ENCODE measurements at regions of chr15 and their contacts with region 1.

Region 1: DNA sequence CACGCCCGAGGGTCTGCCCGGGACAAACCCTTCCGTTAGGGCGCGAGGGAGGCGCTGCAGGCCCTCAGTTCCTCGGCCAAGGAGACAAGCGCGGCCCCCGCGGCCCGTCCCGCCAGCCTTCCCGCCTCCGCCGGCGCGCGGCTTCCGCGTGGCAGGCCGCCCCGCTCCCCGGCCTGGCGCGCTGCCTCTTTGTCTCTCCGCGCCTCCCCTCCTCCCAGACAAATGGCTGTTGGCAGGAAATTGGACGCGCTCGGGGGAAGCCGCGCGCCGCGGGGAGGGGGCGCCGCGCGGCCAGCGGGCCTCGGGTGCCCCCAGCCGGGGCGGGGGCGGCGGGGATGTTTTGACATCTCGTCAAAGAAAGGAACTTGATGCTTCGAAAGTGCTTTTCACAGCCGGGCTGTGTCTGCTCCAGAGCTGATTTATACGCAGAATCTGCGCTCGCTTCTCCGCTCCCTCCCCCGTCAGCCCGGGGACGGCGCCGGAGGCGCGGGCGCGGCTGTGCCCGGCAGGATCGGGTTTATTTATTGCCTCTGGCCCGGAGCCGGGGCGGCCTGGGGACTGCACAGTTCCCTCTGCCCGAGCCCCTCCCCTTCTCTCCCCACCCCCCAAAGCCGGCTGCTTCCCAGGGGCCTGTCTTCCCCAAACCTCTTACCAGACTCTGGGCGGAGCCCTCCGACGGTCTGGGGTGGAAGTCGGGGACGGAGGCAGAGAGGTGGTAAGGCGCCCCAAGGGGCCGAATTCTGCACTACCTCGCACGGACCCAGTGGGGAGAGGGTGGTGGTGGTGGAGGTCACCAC is 20.7 kb downstream of the SHF start:
- DNase-seq: peak; percentile 82
- ATAC-seq: peak; percentile 80
- H3K4me3 ChIP-seq: peak overlapping the region; percentile 75
- H3K27ac ChIP-seq: peak overlapping the region; percentile 63
- H3K4me1 ChIP-seq: peaks cover 20% of the 10 kb centered on the region
- H3K27me3 ChIP-seq: no peaks in the 10 kb centered on the region
- CTCF ChIP-seq: peak; percentile 70

Region 2: DNA sequence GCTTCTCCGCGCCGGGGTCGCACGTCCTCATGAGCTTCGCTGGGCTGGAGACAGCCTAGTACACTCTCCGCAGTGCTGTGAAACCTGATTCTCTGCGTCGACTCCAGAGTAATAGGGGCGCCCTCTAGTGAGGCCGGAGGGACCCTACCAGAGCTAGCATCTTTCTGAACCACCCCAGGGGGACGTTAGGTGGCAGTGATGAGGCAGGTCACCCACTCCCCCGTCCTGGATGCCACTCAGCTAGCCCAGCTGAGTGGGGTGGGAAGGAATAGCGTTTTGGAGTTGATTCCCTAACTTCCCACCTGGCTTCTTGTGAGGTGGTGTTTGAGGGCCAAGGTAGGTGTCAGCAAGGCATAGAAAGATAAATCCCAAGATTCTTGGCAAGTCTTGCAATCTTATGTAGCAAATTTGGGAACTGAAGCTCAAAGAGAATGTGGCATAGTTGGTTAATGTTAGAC is 48.9 kb before region 1 on chr15:
- CTCF ChIA-PET with region 1: interaction called, 21 read pairs
- POLR2A ChIA-PET with region 1: no interaction called
- intact Hi-C with region 1: no loop called
- DNase-seq: peak; percentile 93
- ATAC-seq: peak; percentile 93
- H3K4me3 ChIP-seq: peak overlapping the region; percentile 34; the same call in 1 of the 2 replicates
- H3K27ac ChIP-seq: no peak overlapping the region
- H3K4me1 ChIP-seq: peaks cover 14% of the 10 kb centered on the region
- H3K27me3 ChIP-seq: peaks cover 10% of the 10 kb centered on the region
- CTCF ChIP-seq: peak; percentile 99

Region 3: DNA sequence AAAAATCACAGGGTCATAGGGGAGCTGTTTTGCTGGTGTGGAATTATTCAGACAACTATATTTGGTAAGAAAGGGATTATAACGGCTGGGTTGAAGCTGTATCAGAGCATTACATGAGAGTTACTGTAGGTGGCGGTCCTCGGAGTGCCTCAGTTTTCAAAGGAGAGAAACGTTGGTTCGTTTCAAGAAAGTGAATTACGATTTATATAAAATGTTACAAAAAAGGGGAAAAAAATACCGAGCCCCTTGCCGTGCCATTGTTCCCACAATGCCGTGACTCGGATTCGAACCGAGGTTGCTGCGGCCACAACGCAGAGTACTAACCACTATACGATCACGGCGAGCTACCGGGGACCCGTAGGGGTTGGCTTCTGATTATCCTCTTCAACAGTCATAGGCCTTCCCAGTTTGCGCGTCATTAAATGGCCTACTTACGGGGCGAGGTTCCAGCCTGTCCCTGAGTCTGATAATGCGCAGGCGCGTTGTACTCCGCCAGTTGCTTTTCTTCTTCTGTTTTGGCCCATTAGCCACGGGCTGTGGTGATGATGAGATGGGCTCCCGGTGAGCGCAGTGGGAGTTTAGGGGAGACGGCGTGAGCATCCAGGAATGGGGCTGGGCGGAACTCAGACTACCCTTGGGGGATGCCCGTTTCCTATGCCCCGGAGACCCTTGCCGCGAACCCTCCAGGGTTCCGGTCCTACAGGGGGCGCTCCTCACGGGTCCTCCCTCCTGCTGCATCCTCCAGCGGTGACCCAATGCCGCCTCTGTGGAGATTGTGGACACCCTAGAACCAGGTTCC is 31.5 kb after region 1 on chr15:
- CTCF ChIA-PET with region 1: interaction called, 36 read pairs
- POLR2A ChIA-PET with region 1: interaction called, 3 read pairs
- intact Hi-C with region 1: loop called (anchors 1 kb)
- DNase-seq: peak; percentile 98
- ATAC-seq: peak; percentile 61
- H3K4me3 ChIP-seq: peak overlapping the region; percentile 92
- H3K27ac ChIP-seq: no peak overlapping the region
- H3K4me1 ChIP-seq: 0 out of 2 replicates have a peak, but pooled peaks cover 4% of the 10 kb centered on the region
- H3K27me3 ChIP-seq: no peaks in the 10 kb centered on the region
- CTCF ChIP-seq: peak; percentile 94

Region 4: DNA sequence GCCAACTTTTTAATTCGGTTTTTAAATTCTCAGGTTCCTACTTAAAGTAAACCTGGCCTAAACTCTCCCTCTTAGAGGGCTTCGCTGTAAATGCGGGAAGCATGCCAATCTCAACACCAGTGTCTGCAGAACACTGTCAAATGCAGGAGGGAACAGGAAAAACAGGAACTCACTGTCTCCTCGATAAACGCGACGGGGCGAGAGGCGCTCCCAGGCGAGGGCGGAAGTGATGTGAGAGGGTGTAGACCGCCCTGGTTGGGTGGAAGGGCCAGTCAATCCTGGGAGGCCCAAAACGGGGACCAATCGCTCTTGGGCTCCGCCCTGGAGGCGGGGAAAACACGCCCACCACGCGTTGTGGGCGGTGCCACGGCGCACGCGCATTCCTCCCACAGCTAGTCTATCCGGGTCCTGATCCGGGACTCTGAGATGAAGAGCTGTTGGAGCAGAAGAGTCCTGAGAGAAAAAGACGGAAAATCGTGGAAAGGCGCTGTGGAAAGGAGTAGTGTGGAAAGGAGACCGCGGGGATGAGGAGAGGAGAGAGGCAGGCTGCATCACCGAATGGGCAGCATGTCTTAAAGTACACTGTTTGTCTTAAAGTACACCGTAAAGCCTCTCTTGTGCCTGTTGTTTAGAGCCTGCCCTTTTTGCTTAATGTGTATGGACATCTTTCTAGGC is 112.1 kb after region 1 on chr15:
- CTCF ChIA-PET with region 1: interaction called, 11 read pairs
- POLR2A ChIA-PET with region 1: interaction called, 3 read pairs
- intact Hi-C with region 1: loop called (anchors 1 kb)
- DNase-seq: peak; percentile 99
- ATAC-seq: peak; percentile 99
- H3K4me3 ChIP-seq: peak overlapping the region; percentile 75
- H3K27ac ChIP-seq: peak overlapping the region; percentile 36
- H3K4me1 ChIP-seq: peaks cover 13% of the 10 kb centered on the region
- H3K27me3 ChIP-seq: no peaks in the 10 kb centered on the region
- CTCF ChIP-seq: no peak

Region 5: DNA sequence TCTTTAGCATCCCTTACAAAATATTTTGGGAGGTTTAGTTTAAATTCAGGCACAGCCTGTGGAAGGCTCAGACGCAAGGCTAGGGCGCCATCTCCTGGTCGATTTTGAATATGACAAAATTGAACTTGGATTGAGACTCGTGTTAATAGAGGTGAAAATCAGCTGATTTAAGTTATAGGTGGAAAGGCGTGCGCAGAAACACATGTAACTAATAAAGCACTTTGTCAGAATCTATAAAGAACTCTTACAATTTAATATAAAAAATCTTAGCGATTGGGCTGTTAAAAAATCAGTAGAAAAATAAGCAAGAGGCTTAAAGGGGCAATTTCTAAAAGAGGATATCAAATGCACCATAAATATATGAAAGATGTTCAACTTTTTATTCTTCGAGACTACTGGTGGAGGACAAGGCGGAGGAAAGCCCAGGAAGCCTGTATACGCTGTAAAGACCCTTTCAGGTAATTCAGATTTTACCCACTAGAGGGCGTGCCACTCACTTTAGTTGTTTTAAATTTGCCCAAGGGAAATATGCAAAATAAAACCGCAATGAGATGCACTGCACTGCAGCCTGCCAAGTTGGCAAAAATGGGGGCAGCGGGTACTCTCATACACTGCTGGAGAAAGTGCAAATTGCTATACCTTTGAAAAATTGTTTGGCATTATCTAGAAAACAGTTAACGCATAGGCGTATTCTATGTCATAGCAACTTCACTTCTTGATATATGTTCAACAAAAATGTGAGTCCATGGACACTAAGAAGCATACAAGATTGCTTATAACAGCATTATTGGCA is 290.8 kb after region 1 on chr15:
- CTCF ChIA-PET with region 1: no interaction called
- POLR2A ChIA-PET with region 1: no interaction called
- intact Hi-C with region 1: loop called (anchors 10 kb)
- DNase-seq: peak; percentile 98
- ATAC-seq: peak; percentile 44
- H3K4me3 ChIP-seq: peak overlapping the region; percentile 66
- H3K27ac ChIP-seq: peak overlapping the region; percentile 92
- H3K4me1 ChIP-seq: peaks cover 48% of the 10 kb centered on the region
- H3K27me3 ChIP-seq: no peaks in the 10 kb centered on the region
- CTCF ChIP-seq: peak; percentile 79

Measured in PC-3 (cell line).